ENCODE measurements at regions of chr7 and their contacts with region 1.

Region 1: GRCh38 chr7:118777308-118777707 is 552.8 kb downstream of the ANKRD7 start:
- DNase-seq: no peak
- ATAC-seq: no peak
- H3K4me3 ChIP-seq: no peak overlapping the region
- H3K27ac ChIP-seq: no peak overlapping the region
- H3K4me1 ChIP-seq: no peaks in the 10 kb centered on the region
- H3K27me3 ChIP-seq: no peaks in the 10 kb centered on the region
- CTCF ChIP-seq: no peak
- POLR2A ChIP-seq: no peak
- RAD21 ChIP-seq: no peak

Region 2: GRCh38 chr7:118711688-118712087 is 65.6 kb before region 1 on chr7:
- CTCF ChIA-PET with region 1: no interaction called
- POLR2A ChIA-PET with region 1: no interaction called
- dilution Hi-C with region 1: no loop called
- in situ Hi-C with region 1: no loop called
- intact Hi-C with region 1: loop called (anchors 10 kb)
- DNase-seq: no peak
- ATAC-seq: no peak
- H3K4me3 ChIP-seq: no peak overlapping the region
- H3K27ac ChIP-seq: no peak overlapping the region
- H3K4me1 ChIP-seq: no peaks in the 10 kb centered on the region
- H3K27me3 ChIP-seq: no peaks in the 10 kb centered on the region
- CTCF ChIP-seq: no peak
- POLR2A ChIP-seq: no peak
- RAD21 ChIP-seq: no peak